CD8-positive, alpha-beta T cell (primary cell): ENCODE measurements at regions of chr3 and their contacts with region 1.

Region 1: GRCh38 chr3:119891944-119892721 is 110.2 kb downstream of the NR1I2 start:
- DNase-seq: peak in 8 of 9 experiments; percentile 10 to 76 (median 42)
- ATAC-seq: peak; percentile 68
- H3K4me3 ChIP-seq: no peak overlapping the region
- H3K4me3 Mint-ChIP-seq: no peak overlapping the region
- H3K27ac ChIP-seq: no peak overlapping the region
- H3K27ac Mint-ChIP-seq: no peak overlapping the region
- H3K4me1 ChIP-seq: peaks cover 3% of the 10 kb centered on the region
- H3K4me1 Mint-ChIP-seq: peaks cover 11% of the 10 kb centered on the region
- H3K27me3 ChIP-seq: no peaks in the 10 kb centered on the region
- H3K27me3 Mint-ChIP-seq: no peaks in the 10 kb centered on the region
- CTCF ChIP-seq: peak; percentile 85

Region 2: GRCh38 chr3:119880966-119881365 is 11.2 kb before region 1 on chr3:
- CTCF ChIA-PET with region 1: interaction called, 18 read pairs
- POLR2A ChIA-PET with region 1: no interaction called
- intact Hi-C with region 1: no loop called
- DNase-seq: no peak
- ATAC-seq: no peak
- H3K4me3 ChIP-seq: no peak overlapping the region
- H3K4me3 Mint-ChIP-seq: no peak overlapping the region
- H3K27ac ChIP-seq: no peak overlapping the region
- H3K27ac Mint-ChIP-seq: no peak overlapping the region
- H3K4me1 ChIP-seq: no peaks in the 10 kb centered on the region
- H3K4me1 Mint-ChIP-seq: peaks cover 6% of the 10 kb centered on the region
- H3K27me3 ChIP-seq: no peaks in the 10 kb centered on the region
- H3K27me3 Mint-ChIP-seq: no peaks in the 10 kb centered on the region
- CTCF ChIP-seq: no peak

Region 3: DNA sequence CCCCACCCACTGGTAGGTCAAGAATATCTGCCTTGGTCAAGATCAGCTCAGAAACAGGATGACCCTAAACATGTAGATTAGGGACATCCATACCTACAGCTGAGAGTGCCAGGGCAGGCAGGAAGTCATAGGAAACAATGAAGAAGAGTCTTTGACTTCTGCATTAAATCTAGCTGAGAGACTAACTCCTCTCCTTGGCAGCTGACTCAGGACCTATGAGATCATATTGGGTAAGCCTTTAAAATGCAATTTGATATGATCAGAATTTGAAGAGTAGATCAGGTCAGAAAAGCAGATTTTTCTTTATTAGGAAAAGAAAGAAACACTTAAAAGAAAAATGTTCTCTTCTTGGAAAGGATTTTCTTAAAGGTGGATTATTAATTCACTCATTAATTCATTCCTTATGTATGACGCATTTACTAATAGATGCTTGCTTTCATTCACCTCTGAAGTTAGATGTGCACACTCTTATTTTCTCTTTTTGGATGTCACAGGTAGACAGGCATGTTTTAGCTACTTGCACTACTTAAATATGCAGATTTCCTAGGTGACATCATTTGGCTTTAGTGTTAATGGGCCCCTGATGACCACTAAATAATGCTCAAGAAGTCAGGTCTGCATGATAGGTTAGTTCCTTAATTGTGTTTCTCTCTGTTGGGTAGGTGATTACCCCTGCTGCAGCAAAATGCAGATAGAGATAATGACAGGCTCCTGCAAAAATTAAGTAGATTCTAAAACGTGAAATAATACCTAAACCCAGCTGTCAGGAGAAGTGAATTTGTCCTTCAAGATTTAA is 237.8 kb after region 1 on chr3:
- CTCF ChIA-PET with region 1: interaction called, 12 read pairs
- POLR2A ChIA-PET with region 1: no interaction called
- intact Hi-C with region 1: no loop called
- DNase-seq: no peak
- ATAC-seq: no peak
- H3K4me3 ChIP-seq: no peak overlapping the region
- H3K4me3 Mint-ChIP-seq: no peak overlapping the region
- H3K27ac ChIP-seq: no peak overlapping the region
- H3K27ac Mint-ChIP-seq: no peak overlapping the region
- H3K4me1 ChIP-seq: no peaks in the 10 kb centered on the region
- H3K4me1 Mint-ChIP-seq: no peaks in the 10 kb centered on the region
- H3K27me3 ChIP-seq: peaks cover 0 to 5% of the 10 kb centered on the region in 2 experiments
- H3K27me3 Mint-ChIP-seq: peaks cover 3% of the 10 kb centered on the region
- CTCF ChIP-seq: no peak

Region 4: GRCh38 chr3:120147072-120147871 is 255.1 kb after region 1 on chr3:
- CTCF ChIA-PET with region 1: interaction called, 156 read pairs
- POLR2A ChIA-PET with region 1: interaction called, 3 read pairs
- intact Hi-C with region 1: loop called (anchors 1 kb)
- DNase-seq: peak; percentile 7 to 81 (median 60)
- ATAC-seq: peak; percentile 98
- H3K4me3 ChIP-seq: no peak overlapping the region
- H3K4me3 Mint-ChIP-seq: no peak overlapping the region
- H3K27ac ChIP-seq: no peak overlapping the region
- H3K27ac Mint-ChIP-seq: peak overlapping the region; percentile 60
- H3K4me1 ChIP-seq: peaks cover 10% of the 10 kb centered on the region
- H3K4me1 Mint-ChIP-seq: peaks cover 22% of the 10 kb centered on the region
- H3K27me3 ChIP-seq: no peaks in the 10 kb centered on the region
- H3K27me3 Mint-ChIP-seq: no peaks in the 10 kb centered on the region
- CTCF ChIP-seq: peak; percentile 62

Region 5: DNA sequence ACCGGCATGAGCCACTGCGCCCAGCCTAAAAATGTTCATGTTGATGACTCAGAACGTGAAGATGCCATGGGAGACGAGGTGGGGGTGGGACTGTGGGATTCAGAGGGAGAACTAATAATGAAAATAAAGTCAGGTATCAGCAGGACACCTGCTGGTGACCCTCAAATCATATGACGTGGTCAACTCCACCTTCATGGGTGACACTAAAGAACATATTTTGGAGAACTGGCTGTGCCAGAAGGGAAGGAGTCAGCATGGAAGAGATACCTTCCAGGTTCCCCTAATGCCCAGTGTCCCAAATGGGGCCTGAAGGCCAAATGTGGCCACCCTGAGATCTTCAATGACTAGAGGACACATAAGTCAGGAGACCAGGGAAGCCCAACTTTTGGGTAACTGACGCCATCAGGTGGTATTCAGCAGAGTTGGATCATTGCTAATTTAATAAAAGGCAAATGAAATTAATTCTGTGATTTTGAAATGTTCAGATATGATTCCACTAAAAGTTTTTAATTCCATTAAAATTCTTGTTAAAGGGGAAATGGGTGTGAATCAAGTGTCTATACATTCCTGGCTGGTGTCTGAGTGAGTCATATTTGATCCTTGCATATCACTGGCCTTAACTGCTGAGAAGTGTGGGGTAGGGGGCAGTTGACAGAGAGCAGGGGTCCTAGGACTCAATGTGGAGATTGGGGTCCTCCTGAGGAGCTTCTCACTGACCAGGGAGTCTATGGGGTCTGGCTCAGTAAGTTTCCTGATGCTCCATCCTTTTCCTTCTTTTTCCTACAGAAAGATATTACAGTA is 290.8 kb after region 1 on chr3:
- CTCF ChIA-PET with region 1: interaction called, 4 read pairs
- POLR2A ChIA-PET with region 1: no interaction called
- intact Hi-C with region 1: loop called in 1 of 2 experiments (anchors 1 kb)
- DNase-seq: peak in 3 of 9 experiments; percentile 15 to 29 (median 23)
- ATAC-seq: no peak
- H3K4me3 ChIP-seq: no peak overlapping the region
- H3K4me3 Mint-ChIP-seq: no peak overlapping the region
- H3K27ac ChIP-seq: no peak overlapping the region
- H3K27ac Mint-ChIP-seq: no peak overlapping the region
- H3K4me1 ChIP-seq: no peaks in the 10 kb centered on the region
- H3K4me1 Mint-ChIP-seq: no peaks in the 10 kb centered on the region
- H3K27me3 ChIP-seq: no peaks in the 10 kb centered on the region
- H3K27me3 Mint-ChIP-seq: peaks cover 13% of the 10 kb centered on the region
- CTCF ChIP-seq: no peak

Region 6: GRCh38 chr3:120198305-120198878 is 306.3 kb after region 1 on chr3:
- CTCF ChIA-PET with region 1: interaction called, 5 read pairs
- POLR2A ChIA-PET with region 1: no interaction called
- intact Hi-C with region 1: loop called (anchors 1 to 5 kb)
- DNase-seq: peak in 2 of 9 experiments; percentile 8 to 25
- ATAC-seq: no peak
- H3K4me3 ChIP-seq: no peak overlapping the region
- H3K4me3 Mint-ChIP-seq: no peak overlapping the region
- H3K27ac ChIP-seq: no peak overlapping the region
- H3K27ac Mint-ChIP-seq: no peak overlapping the region
- H3K4me1 ChIP-seq: no peaks in the 10 kb centered on the region
- H3K4me1 Mint-ChIP-seq: no peaks in the 10 kb centered on the region
- H3K27me3 ChIP-seq: no peaks in the 10 kb centered on the region
- H3K27me3 Mint-ChIP-seq: no peaks in the 10 kb centered on the region
- CTCF ChIP-seq: no peak

Region 7: DNA sequence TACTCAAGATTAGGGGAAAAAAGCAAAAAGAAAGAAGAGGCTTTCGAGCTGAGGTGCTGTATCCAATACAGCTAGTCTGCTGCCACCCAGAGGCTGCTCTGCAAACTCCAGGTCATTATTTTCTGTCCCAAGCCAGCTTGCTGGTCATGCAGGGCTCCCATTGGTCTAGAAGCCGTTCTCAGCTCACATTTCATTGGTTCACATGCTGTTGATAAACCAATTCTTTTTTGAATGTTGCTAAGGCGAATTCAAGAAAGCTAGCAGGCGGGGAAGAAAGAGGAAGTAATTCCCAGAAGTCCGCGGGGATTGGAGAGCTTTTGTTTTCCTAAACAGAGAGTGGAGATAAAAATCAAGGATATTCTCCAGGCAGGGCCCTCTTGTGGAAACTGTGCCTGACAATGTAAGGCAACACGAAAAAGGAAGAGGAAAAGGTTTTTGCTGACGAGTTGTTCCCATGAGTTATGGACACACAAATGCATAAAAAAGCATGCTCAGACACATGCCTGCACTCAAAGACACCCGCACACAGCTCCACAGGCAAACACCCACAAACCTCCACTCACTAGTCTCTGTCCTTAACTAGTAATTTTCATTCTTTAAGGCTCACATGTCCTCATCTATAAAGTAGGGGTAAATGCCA is 525.3 kb after region 1 on chr3:
- CTCF ChIA-PET with region 1: interaction called, 6 read pairs
- POLR2A ChIA-PET with region 1: no interaction called
- intact Hi-C with region 1: loop called (anchors 2 kb)
- DNase-seq: peak; percentile 66 to 90 (median 80)
- ATAC-seq: peak; percentile 99
- H3K4me3 ChIP-seq: peak overlapping the region; percentile 47 to 55
- H3K4me3 Mint-ChIP-seq: peak overlapping the region; percentile 84
- H3K27ac ChIP-seq: no peak overlapping the region
- H3K27ac Mint-ChIP-seq: no peak overlapping the region
- H3K4me1 ChIP-seq: no peaks in the 10 kb centered on the region
- H3K4me1 Mint-ChIP-seq: peaks cover 21% of the 10 kb centered on the region
- H3K27me3 ChIP-seq: no peaks in the 10 kb centered on the region
- H3K27me3 Mint-ChIP-seq: peaks cover 4% of the 10 kb centered on the region
- CTCF ChIP-seq: peak; percentile 87